GM18951 (cell line): ENCODE measurements at regions of chr1 and their contacts with region 1.

Region 1: GRCh38 chr1:9561429-9561828 is 22.2 kb downstream of the SLC25A33 start:
- POLR2A ChIP-seq: no peak

Region 2: DNA sequence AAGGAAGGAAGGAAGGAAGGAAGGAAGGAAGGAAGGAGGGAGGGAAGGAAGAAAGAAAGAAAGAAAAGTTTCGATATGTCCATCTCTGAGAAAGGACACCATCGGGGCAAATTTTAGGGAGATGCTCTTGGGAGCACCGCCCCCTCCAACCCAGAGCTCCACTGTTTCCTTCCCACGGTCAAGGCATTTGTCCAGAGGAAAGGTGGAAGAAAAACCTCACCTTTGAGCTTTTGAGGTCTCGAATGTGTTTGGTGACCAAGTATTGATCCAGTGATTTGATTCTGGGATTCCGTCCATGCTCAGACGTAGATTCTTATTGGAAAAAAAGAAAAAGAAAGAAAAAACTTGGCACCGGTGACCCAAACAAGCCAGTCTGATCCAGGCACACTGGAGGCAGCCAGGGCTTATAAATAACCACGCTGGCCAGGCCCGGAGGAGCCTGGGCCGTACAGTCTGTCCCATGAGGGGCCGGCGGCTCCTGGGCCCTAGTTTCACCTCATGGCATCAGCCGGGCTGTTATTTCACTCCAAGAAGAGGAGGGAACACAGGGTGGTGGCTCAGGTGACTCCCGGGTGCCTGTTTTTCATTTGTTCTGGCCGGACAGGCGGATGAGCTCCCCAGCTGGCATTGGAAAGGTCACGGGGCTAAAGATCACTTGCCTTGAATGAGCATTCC is 58.3 kb before region 1 on chr1:
- in situ Hi-C with region 1: loop called (anchors 10 kb)
- POLR2A ChIP-seq: no peak